Activated CD8-positive, alpha-beta T cell treated with anti-CD3 and anti-CD28 coated beads for 36 hours (primary cell): ENCODE measurements at regions of chr3 and their contacts with region 1.

Region 1: DNA sequence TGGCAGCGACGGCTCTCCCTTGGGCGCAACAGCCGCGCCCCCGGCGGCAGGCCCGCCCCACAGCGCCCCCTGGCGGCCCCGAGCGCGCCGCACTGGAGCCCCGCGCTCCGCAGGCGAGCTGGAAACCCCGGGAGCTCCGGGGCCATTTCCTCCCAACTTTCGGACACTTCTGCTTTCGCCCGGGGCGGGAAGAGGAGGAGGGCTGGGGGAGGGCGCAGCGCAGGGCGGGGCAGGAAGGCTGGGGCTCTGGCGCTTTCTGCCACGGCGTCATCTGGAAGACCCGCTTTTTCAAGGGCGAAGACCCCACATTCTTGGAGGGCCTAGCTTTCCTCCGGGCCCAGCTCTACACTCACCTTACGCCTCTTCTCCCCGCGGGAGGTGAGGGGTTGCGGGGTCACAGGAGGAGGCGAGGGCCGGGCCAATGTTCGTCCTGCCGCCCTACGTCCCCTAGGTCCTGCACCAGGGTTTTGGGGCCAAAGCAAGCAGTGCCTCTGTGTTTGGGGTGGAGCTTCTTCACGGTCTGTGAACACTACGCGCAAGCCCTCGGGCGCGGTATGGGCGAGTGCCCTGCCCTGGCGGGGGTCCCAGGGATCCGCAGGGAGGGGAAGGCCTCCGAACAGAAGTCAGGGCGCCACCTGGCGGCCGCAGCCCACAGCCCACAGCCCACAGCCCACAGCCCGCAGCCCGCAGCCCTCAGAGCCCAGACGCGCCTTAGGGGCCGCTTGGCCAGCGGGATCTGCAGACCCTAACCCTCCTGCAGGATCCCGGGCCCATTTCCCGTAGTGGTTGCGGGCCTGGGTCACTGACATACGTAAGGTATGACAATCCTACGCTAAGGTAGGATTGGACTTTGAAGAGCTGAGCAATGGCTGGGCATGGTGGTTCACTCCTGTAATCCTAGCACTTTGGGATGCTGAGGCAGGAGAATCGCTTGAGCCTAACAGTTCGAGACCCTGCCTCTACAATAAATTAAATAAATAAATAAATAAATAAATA is 31.1 kb downstream of the FOXL2 start:
- DNase-seq: peak; percentile 91
- ATAC-seq: peak; percentile 93
- H3K4me3 Mint-ChIP-seq: peak overlapping the region; percentile 80
- H3K27ac Mint-ChIP-seq: peak overlapping the region; percentile 78
- H3K4me1 Mint-ChIP-seq: peaks cover 3% of the 10 kb centered on the region
- H3K27me3 Mint-ChIP-seq: peaks cover 4% of the 10 kb centered on the region
- CTCF ChIP-seq: peak; percentile 90

Region 2: GRCh38 chr3:138594150-138594934 is 321.5 kb before region 1 on chr3 and contains the start of gene CEP70:
- CTCF ChIA-PET with region 1: interaction called, 263 read pairs
- POLR2A ChIA-PET with region 1: interaction called, 6 read pairs
- intact Hi-C with region 1: loop called (anchors 2 kb)
- DNase-seq: peak; percentile 95
- ATAC-seq: peak; percentile 96
- H3K4me3 Mint-ChIP-seq: peak within 1 kb of the TSS; percentile 80
- H3K27ac Mint-ChIP-seq: peak within 1 kb of the TSS; percentile 91
- H3K4me1 Mint-ChIP-seq: no peaks in the 10 kb centered on the region
- H3K27me3 Mint-ChIP-seq: no peaks in the 10 kb centered on the region
- CTCF ChIP-seq: peak; percentile 85
- total RNA-seq, gene CEP70: 11.5 to 14.8 TPM

Region 3: GRCh38 chr3:138678086-138678485 is 237.7 kb before region 1 on chr3:
- CTCF ChIA-PET with region 1: interaction called, 14 read pairs
- POLR2A ChIA-PET with region 1: no interaction called
- intact Hi-C with region 1: no loop called
- DNase-seq: no peak
- ATAC-seq: no peak
- H3K4me3 Mint-ChIP-seq: no peak overlapping the region
- H3K27ac Mint-ChIP-seq: no peak overlapping the region
- H3K4me1 Mint-ChIP-seq: no peaks in the 10 kb centered on the region
- H3K27me3 Mint-ChIP-seq: no peaks in the 10 kb centered on the region
- CTCF ChIP-seq: no peak

Region 4: DNA sequence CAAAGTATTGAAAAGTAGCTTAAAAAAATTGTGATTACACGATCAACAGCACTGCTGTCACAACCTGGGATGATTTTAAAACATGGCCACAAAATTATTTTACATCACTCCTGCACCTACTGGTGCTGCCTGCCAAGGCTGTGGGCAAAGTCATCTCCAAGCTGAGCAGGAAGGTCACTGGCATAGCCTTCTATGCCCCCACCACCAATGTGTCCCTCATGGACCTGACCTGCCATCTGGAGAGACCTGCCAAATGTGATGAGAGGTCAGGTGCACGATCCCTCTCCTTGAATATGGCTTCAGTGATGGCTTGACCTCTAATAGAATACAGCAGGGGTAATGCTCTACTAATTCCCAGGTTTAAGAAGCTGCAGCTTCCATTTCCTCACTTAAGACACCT is 138.8 kb before region 1 on chr3:
- CTCF ChIA-PET with region 1: interaction called, 10 read pairs
- POLR2A ChIA-PET with region 1: no interaction called
- intact Hi-C with region 1: no loop called
- DNase-seq: no peak
- ATAC-seq: no peak
- H3K4me3 Mint-ChIP-seq: no peak overlapping the region
- H3K27ac Mint-ChIP-seq: no peak overlapping the region
- H3K4me1 Mint-ChIP-seq: peaks cover 28% of the 10 kb centered on the region
- H3K27me3 Mint-ChIP-seq: no peaks in the 10 kb centered on the region
- CTCF ChIP-seq: no peak

Region 5: DNA sequence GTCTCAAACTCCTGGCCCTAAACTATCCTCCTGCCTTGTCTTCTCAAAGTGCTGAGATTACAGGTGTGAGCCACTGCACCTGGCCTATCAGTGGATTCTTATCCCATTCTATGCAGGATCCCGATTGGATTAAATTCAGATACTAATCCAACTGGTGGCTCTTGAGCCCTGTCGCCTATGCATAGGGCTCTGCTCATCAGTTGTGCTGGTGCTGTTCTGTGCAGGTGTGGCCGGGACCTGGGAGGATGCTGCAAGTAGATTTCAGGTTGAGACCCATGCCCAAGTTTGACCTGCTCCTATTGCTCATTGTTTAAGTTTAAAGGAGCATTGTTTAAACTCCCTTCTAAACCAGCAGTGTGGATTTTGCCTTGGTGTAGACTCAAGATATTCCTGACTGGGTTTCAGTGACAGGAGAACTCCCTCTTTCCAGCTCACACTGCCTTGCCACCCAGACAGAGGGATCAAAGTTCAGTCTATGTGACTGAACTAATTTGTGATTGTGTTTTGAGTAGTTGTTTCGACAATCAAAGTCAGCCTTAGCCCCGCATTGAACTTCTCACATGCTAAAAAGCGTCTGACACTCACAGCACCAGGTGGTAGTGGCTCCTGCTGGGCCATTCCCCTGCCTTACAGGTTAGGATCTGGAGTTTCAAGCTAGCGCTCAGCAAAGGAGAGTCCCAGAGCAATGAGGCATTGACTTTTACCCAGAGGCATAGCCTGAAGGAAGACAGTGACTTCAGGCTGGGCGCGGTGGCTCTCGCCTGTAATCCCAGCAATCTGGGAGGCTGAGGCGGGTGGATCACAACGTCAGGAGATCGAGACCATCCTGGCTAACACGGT is 36.0 kb before region 1 on chr3:
- CTCF ChIA-PET with region 1: interaction called, 19 read pairs
- POLR2A ChIA-PET with region 1: no interaction called
- intact Hi-C with region 1: no loop called
- DNase-seq: no peak
- ATAC-seq: no peak
- H3K4me3 Mint-ChIP-seq: no peak overlapping the region
- H3K27ac Mint-ChIP-seq: no peak overlapping the region
- H3K4me1 Mint-ChIP-seq: peaks cover 5% of the 10 kb centered on the region
- H3K27me3 Mint-ChIP-seq: no peaks in the 10 kb centered on the region
- CTCF ChIP-seq: no peak

Region 6: DNA sequence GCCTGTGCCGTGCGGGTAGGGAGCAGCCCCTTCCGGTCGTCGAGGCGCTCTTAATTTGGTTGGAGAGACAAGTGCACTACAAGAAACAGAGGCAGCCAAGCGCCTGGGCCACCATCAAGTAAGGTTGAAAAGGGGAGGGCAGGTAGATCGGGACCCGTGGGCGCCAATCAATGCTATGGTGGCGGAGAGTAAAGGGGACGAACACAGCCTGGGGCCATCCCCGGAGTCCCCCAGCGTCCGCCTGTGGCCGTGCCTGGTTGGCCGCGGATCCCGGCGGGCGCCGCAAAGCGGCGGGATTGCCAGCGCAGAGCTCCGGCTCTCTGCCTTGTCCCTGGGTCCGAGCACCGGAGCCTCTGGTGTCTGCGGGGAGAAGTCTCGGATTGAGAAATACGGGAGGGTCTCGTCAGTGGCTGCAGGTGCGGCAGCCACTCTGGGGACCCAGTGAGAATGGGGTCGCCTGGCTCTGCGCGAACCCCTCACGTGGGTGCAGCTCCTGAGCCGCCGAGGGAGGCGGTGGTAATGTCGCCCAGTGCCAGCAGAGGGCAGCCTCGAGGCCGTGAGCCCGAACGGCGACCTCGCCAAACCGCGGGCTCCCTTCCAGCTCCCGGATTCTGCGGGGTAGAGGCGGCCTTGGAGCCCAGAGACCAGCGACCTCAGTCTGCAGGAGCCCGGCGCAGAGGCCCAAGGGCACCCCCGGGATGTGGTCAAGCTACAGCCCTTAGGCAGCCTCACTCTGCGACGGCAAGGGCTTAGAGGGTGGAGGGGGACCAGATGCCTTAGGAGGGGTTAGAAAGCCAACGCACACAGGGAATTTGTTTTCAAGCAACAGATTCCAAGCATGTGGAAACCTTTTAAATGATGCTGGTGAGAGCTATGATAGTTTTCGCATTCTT is 20.3 kb after region 1 on chr3:
- CTCF ChIA-PET with region 1: interaction called, 118 read pairs
- POLR2A ChIA-PET with region 1: no interaction called
- intact Hi-C with region 1: no loop called
- DNase-seq: peak; percentile 79
- ATAC-seq: peak; percentile 87
- H3K4me3 Mint-ChIP-seq: peak overlapping the region; percentile 67
- H3K27ac Mint-ChIP-seq: no peak overlapping the region
- H3K4me1 Mint-ChIP-seq: peaks cover 31% of the 10 kb centered on the region
- H3K27me3 Mint-ChIP-seq: peaks cover 71% of the 10 kb centered on the region
- CTCF ChIP-seq: peak; percentile 92